GM13977 (cell line): ENCODE measurements at regions of chr14 and their contacts with region 1.

Region 1: GRCh38 chr14:105554022-105554421 is 27.6 kb downstream of the TMEM121 start:
- DNase-seq: no peak
- CTCF ChIP-seq: no peak

Region 2: GRCh38 chr14:105075379-105076295 is 478.4 kb before region 1 on chr14:
- in situ Hi-C with region 1: no loop called
- DNase-seq: peak; percentile 88
- CTCF ChIP-seq: no peak

Region 3: DNA sequence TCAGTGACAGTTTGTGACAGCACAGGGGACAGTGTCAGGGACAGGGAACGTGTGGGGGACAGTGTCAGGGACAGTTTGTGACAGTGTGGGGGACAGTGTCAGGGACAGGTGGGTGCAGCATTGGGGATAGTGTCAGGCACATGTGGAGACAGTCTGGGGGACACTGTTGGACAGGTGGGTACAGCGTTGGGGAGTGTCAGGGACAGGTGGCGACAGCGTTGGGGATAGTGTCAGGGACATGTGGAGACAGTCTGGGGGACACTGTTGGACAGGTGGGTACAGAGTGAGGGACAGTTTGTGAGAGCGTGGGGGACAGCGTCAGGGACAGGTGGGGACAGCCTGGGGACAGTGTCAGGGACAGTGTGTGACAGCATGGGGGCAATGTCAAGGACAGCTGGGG is 112.4 kb after region 1 on chr14:
- in situ Hi-C with region 1: loop called (anchors 10 kb)
- DNase-seq: no peak
- CTCF ChIP-seq: no peak

Region 4: GRCh38 chr14:105894125-105894977 is 340.3 kb after region 1 on chr14:
- in situ Hi-C with region 1: no loop called
- DNase-seq: no peak
- CTCF ChIP-seq: no peak

Region 5: GRCh38 chr14:106013879-106014376 is 459.9 kb after region 1 on chr14:
- in situ Hi-C with region 1: loop called (anchors 5 kb)
- DNase-seq: no peak
- CTCF ChIP-seq: no peak